RWPE1 (cell line): ENCODE measurements at regions of chr5 and their contacts with region 1.

Region 1: GRCh38 chr5:80083101-80083890 is 48.1 kb downstream of the THBS4 start:
- DNase-seq: peak; percentile 87
- H3K27ac ChIP-seq: peak overlapping the region; percentile 35; the same call in 1 of the 2 replicates
- CTCF ChIP-seq: peak; percentile 63

Region 2: DNA sequence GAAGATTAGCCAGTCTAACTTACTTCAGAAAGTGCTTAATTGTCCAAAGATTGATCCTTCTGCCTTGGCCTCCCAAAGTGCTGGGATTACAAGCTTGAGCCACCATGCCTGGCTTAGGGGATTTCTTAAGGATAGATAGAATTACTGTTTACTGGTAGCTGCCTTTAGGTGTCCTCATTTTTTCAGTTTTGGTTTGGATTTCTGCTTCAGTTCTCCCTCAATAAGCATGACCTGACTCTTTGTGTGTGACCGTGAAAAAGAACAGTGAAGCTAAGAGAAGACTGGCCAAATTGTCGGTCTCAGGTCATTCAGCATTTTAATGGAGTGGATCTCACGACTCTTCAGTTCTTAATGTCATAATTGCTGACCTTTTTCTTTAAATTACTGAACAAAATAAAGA is 416.5 kb before region 1 on chr5:
- CTCF ChIA-PET with region 1: no interaction called
- POLR2A ChIA-PET with region 1: no interaction called
- DNase-seq: no peak
- H3K27ac ChIP-seq: no peak overlapping the region
- CTCF ChIP-seq: no peak

Region 3: GRCh38 chr5:79990598-79991507 is 92.4 kb before region 1 on chr5 and contains the start of gene MTX3:
- CTCF ChIA-PET with region 1: interaction called, 12 read pairs
- POLR2A ChIA-PET with region 1: no interaction called
- DNase-seq: peak; percentile 93
- H3K27ac ChIP-seq: peak within 1 kb of the TSS; percentile 83
- CTCF ChIP-seq: no peak